Gastrocnemius medialis (tissue), 4 donors: ENCODE measurements at regions of chrX and their contacts with region 1.

Region 1: DNA sequence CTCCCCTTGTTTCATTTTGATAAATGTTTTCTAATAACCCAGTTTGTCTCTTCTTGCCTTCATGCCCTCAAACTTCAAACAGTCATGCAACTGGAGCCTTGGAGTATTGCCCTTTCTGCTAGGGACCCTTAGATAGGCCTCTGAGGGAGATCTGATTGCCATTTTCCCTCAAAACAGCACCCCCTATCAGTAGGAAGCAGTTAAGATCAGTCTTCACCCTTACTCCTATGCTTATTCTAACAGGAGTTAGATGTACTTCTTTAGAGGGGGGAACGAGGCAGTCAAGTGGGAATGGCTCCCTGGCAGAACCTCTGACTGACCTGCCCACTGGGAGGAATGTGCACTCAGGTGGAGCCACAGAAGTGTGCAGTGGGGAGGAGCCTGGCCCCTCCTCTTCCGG is 74.1 kb downstream of the FAM47A start:
- DNase-seq: no peak
- ATAC-seq: no peak
- H3K4me3 ChIP-seq: no peak overlapping the region
- H3K27ac ChIP-seq: no peak overlapping the region
- H3K4me1 ChIP-seq: no peaks in the 10 kb centered on the region
- H3K27me3 ChIP-seq: no peaks in the 10 kb centered on the region
- CTCF ChIP-seq: no peak
- POLR2A ChIP-seq: no peak

Region 2: DNA sequence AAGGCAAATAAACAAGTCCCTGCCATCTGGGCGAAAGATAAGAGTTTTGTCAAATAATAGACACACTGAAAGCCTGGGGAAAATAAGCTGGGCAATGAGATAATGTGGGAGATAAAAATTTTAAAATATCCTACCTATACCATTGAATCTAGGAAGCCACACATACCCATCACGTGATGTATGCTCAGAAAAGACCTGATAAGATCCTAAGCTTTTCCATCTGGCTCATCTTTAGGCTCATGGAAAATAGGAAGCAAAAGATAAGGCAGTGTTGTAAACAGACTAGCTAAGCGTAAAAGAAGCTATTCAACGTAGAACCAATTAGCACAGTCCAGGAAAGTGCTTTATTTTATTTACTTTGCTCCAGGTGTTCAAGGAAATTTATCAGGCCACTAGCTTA is 29.5 kb before region 1 on chrX:
- in situ Hi-C with region 1: no loop called
- intact Hi-C with region 1: loop called (anchors 5 kb)
- DNase-seq: no peak
- ATAC-seq: no peak
- H3K4me3 ChIP-seq: no peak overlapping the region
- H3K27ac ChIP-seq: no peak overlapping the region
- H3K4me1 ChIP-seq: no peaks in the 10 kb centered on the region
- H3K27me3 ChIP-seq: no peaks in the 10 kb centered on the region
- CTCF ChIP-seq: no peak
- POLR2A ChIP-seq: no peak

Region 3: DNA sequence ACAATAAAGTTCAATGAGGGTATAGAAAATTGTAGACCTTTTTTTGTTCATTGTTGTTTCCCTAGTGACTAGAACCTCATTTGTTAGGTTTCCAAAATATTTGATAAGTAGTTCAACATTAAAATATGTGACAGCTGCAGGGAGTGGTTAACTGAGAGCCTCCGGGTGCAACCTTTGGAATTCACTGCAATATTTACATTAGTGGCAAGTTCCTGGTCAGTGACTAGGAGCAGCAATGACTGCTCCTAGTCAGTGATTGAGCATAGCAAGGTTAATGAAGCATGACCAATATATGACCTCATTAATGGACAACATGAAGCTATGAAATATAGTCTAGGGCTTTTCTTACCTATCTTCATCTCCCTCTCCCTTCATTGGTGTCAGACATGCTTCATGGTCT is 139.9 kb after region 1 on chrX:
- in situ Hi-C with region 1: no loop called
- intact Hi-C with region 1: no loop called
- DNase-seq: no peak
- ATAC-seq: no peak
- H3K4me3 ChIP-seq: no peak overlapping the region
- H3K27ac ChIP-seq: no peak overlapping the region
- H3K4me1 ChIP-seq: no peaks in the 10 kb centered on the region
- H3K27me3 ChIP-seq: no peaks in the 10 kb centered on the region
- CTCF ChIP-seq: no peak
- POLR2A ChIP-seq: no peak

Region 4: GRCh38 chrX:34987646-34988045 is 929.6 kb after region 1 on chrX:
- in situ Hi-C with region 1: no loop called
- intact Hi-C with region 1: no loop called
- DNase-seq: no peak
- ATAC-seq: no peak
- H3K4me3 ChIP-seq: no peak overlapping the region
- H3K27ac ChIP-seq: no peak overlapping the region
- H3K4me1 ChIP-seq: no peaks in the 10 kb centered on the region
- H3K27me3 ChIP-seq: no peaks in the 10 kb centered on the region
- CTCF ChIP-seq: no peak
- POLR2A ChIP-seq: no peak